ENCODE measurements at regions of chr12 and their contacts with region 1.

Region 1: DNA sequence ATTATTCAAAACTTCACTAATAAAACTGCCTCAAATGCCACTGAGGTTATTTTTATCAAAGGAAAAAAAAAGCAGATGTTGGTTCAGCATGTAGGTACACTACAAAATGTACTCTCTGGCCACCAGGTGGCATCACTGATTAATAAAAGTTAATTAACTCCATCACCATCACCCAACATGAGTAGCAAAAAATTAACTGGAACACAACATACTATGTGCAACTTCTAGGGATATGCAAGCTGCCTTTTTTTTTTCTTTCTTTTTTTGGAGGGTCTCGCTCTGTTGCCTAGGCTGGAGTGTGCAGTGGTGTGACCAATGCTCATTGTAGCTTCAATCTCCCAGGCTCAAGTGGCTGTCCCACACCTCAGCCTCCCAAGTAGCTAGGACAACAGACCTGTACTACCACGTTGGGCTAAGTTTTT is 43.8 kb upstream of the NR2C1 start:
- DNase-seq: peak; percentile 85
- H3K4me3 ChIP-seq: no peak overlapping the region
- H3K27ac ChIP-seq: peak overlapping the region; percentile 88
- H3K4me1 ChIP-seq: peaks cover 25% of the 10 kb centered on the region
- H3K27me3 ChIP-seq: no peaks in the 10 kb centered on the region
- CTCF ChIP-seq: peak; percentile 42 to 45
- POLR2A ChIP-seq: no peak

Region 2: GRCh38 chr12:94640134-94640928 is 476.9 kb before region 1 on chr12:
- CTCF ChIA-PET with region 1: no interaction called
- POLR2A ChIA-PET with region 1: no interaction called
- dilution Hi-C with region 1: no loop called
- intact Hi-C with region 1: no loop called
- DNase-seq: no peak
- H3K4me3 ChIP-seq: no peak overlapping the region
- H3K27ac ChIP-seq: no peak overlapping the region
- H3K4me1 ChIP-seq: peaks cover 22% of the 10 kb centered on the region
- H3K27me3 ChIP-seq: no peaks in the 10 kb centered on the region
- CTCF ChIP-seq: no peak
- POLR2A ChIP-seq: no peak

Region 3: GRCh38 chr12:95169368-95169767 is 52.2 kb after region 1 on chr12:
- CTCF ChIA-PET with region 1: interaction called, 3 read pairs
- POLR2A ChIA-PET with region 1: no interaction called
- dilution Hi-C with region 1: no loop called
- intact Hi-C with region 1: loop called (anchors 1 kb)
- DNase-seq: peak; percentile 96
- H3K4me3 ChIP-seq: peak overlapping the region in 1 of 3 experiments; percentile 11
- H3K27ac ChIP-seq: peak overlapping the region; percentile 90
- H3K4me1 ChIP-seq: peaks cover 45% of the 10 kb centered on the region
- H3K27me3 ChIP-seq: no peaks in the 10 kb centered on the region
- CTCF ChIP-seq: no peak
- POLR2A ChIP-seq: peak; percentile 48

Region 4: GRCh38 chr12:95262808-95263207 is 145.6 kb after region 1 on chr12:
- CTCF ChIA-PET with region 1: interaction called, 6 read pairs
- POLR2A ChIA-PET with region 1: no interaction called
- dilution Hi-C with region 1: no loop called
- intact Hi-C with region 1: loop called (anchors 1 kb)
- DNase-seq: peak; percentile 98
- H3K4me3 ChIP-seq: peak overlapping the region in 1 of 3 experiments; percentile 20
- H3K27ac ChIP-seq: peak overlapping the region; percentile 93
- H3K4me1 ChIP-seq: peaks cover 39% of the 10 kb centered on the region
- H3K27me3 ChIP-seq: no peaks in the 10 kb centered on the region
- CTCF ChIP-seq: no peak
- POLR2A ChIP-seq: no peak

Region 5: GRCh38 chr12:95277139-95277538 is 159.9 kb after region 1 on chr12:
- CTCF ChIA-PET with region 1: interaction called, 15 read pairs
- POLR2A ChIA-PET with region 1: no interaction called
- dilution Hi-C with region 1: no loop called
- intact Hi-C with region 1: no loop called
- DNase-seq: peak; percentile 96
- H3K4me3 ChIP-seq: no peak overlapping the region
- H3K27ac ChIP-seq: peak overlapping the region; percentile 56
- H3K4me1 ChIP-seq: peaks cover 17% of the 10 kb centered on the region
- H3K27me3 ChIP-seq: no peaks in the 10 kb centered on the region
- CTCF ChIP-seq: no peak
- POLR2A ChIP-seq: no peak

Region 6: DNA sequence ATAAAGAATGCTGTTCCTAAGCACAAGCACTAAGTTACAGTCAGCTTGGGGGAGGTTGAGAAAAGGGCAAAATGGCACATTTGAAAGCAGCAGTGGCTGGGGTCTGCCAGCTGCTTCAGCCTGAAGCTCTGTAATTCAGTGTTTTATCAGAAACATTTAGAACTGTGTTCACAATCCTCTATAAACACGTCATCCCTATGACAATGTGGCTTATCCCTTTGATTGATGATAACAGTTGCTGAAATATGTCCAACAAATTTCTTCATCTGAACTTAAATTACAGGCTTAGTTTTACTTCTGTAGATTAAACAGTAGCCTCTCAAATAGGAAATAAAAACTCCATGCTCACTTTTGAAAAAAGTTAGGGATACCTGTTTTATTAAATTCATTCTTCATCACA is 209.3 kb after region 1 on chr12:
- CTCF ChIA-PET with region 1: interaction called, 131 read pairs
- POLR2A ChIA-PET with region 1: no interaction called
- dilution Hi-C with region 1: no loop called
- intact Hi-C with region 1: no loop called
- DNase-seq: no peak
- H3K4me3 ChIP-seq: no peak overlapping the region
- H3K27ac ChIP-seq: no peak overlapping the region
- H3K4me1 ChIP-seq: no peaks in the 10 kb centered on the region
- H3K27me3 ChIP-seq: no peaks in the 10 kb centered on the region
- CTCF ChIP-seq: no peak
- POLR2A ChIP-seq: no peak

Region 7: GRCh38 chr12:95336390-95337067 is 219.3 kb after region 1 on chr12:
- CTCF ChIA-PET with region 1: interaction called, 131 read pairs
- POLR2A ChIA-PET with region 1: no interaction called
- dilution Hi-C with region 1: no loop called
- intact Hi-C with region 1: loop called (anchors 1 kb)
- DNase-seq: peak; percentile 91
- H3K4me3 ChIP-seq: peak overlapping the region in 1 of 3 experiments; percentile 27
- H3K27ac ChIP-seq: peak overlapping the region; percentile 50
- H3K4me1 ChIP-seq: peaks cover 11% of the 10 kb centered on the region
- H3K27me3 ChIP-seq: no peaks in the 10 kb centered on the region
- CTCF ChIP-seq: peak; percentile 93 to 98
- POLR2A ChIP-seq: no peak

Region 8: GRCh38 chr12:95473884-95474659 is 356.9 kb after region 1 on chr12 and contains the start of gene METAP2:
- CTCF ChIA-PET with region 1: no interaction called
- POLR2A ChIA-PET with region 1: no interaction called
- dilution Hi-C with region 1: no loop called
- intact Hi-C with region 1: loop called (anchors 2 kb)
- DNase-seq: peak; percentile 97
- H3K4me3 ChIP-seq: peak within 1 kb of the TSS; percentile 62 to 82 (median 78)
- H3K27ac ChIP-seq: peak within 1 kb of the TSS; percentile 87
- H3K4me1 ChIP-seq: peaks cover 18% of the 10 kb centered on the region
- H3K27me3 ChIP-seq: no peaks in the 10 kb centered on the region
- CTCF ChIP-seq: no peak
- POLR2A ChIP-seq: peak; percentile 85
- total RNA-seq, gene METAP2: 89.1 and 105 TPM in 2 replicates

Measured in endothelial cell of umbilical vein (primary cell).